ENCODE measurements at regions of chr14 and their contacts with region 1.

Region 1: GRCh38 chr14:63770187-63770807 is 42.4 kb upstream of the SGPP1 start:
- DNase-seq: peak; percentile 53
- H3K4me3 ChIP-seq: no peak overlapping the region; a peak in 1 of 4 replicates
- H3K27ac ChIP-seq: no peak overlapping the region
- H3K4me1 ChIP-seq: no peaks in the 10 kb centered on the region
- H3K27me3 ChIP-seq: no peaks in the 10 kb centered on the region
- CTCF ChIP-seq: peak; percentile 77
- EP300 ChIP-seq: no peak
- RAD21 ChIP-seq: peak; percentile 69

Region 2: DNA sequence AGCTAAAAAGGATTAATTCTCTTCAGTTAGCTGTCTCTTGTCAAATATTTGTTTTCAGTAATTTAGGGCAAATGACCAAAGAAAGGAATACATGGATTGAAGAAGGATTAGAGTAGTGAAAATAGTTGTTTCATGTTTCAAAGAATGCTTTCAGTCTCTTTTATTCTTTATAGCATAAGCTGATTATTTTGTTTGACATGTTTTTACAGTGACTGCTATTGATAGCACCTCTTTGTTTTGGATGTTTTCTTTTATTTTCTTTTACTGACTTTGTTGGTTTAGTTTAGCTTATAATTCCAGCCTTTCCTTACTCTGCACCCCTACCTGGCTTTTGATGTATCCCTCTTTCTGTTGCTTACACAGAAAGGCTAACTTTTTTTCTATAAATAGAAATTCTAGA is 13.1 kb before region 1 on chr14:
- CTCF ChIA-PET with region 1: interaction called, 11 read pairs
- POLR2A ChIA-PET with region 1: no interaction called
- DNase-seq: no peak
- H3K4me3 ChIP-seq: no peak overlapping the region
- H3K27ac ChIP-seq: no peak overlapping the region
- H3K4me1 ChIP-seq: no peaks in the 10 kb centered on the region
- H3K27me3 ChIP-seq: no peaks in the 10 kb centered on the region
- CTCF ChIP-seq: no peak
- EP300 ChIP-seq: no peak
- RAD21 ChIP-seq: no peak

Region 3: DNA sequence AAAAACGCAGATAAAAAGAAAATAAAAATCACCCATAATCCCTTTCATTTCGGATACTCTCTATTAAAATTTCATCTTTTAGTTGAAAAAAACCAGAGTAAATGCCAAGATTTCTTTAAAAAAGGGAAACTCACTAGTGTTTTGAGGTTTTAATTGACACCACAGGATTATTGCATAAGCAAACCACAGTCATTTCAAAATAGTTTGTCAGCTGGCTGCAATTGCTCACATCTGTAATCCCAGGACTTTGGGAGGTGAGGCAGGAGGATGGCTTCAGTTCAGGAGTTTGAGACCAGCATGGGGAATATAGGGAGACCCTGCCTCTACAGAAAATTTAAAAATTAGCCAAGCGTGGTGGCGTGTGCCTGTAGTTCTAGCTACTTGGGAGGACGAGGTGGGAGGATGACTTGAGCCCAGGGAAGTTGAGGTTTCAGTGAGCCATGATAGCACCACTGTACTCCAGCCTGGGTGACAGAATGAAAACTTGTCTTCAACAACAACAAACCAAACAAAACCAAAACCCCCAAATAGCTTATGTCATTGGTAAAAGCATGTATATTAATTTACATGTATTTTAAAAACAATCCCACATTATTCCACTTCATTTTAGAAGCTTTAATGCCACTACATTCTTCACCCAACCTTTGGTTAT is 131.3 kb after region 1 on chr14:
- CTCF ChIA-PET with region 1: no interaction called
- POLR2A ChIA-PET with region 1: no interaction called
- DNase-seq: no peak
- H3K4me3 ChIP-seq: no peak overlapping the region
- H3K27ac ChIP-seq: no peak overlapping the region
- H3K4me1 ChIP-seq: peaks cover 3 to 9% of the 10 kb centered on the region in 2 experiments; a peak in 1 of 4 replicates
- H3K27me3 ChIP-seq: no peaks in the 10 kb centered on the region
- CTCF ChIP-seq: no peak
- EP300 ChIP-seq: no peak
- RAD21 ChIP-seq: no peak